OCI-LY7 (cell line): ENCODE measurements at regions of chr6 and their contacts with region 1.

Region 1: GRCh38 chr6:134174672-134175198 is 122.3 kb upstream of the SLC2A12 start:
- DNase-seq: peak; percentile 93
- H3K4me3 ChIP-seq: peak overlapping the region; percentile 76
- H3K27ac ChIP-seq: peak overlapping the region; percentile 39
- H3K4me1 ChIP-seq: peaks cover 35% of the 10 kb centered on the region
- CTCF ChIP-seq: no peak

Region 2: DNA sequence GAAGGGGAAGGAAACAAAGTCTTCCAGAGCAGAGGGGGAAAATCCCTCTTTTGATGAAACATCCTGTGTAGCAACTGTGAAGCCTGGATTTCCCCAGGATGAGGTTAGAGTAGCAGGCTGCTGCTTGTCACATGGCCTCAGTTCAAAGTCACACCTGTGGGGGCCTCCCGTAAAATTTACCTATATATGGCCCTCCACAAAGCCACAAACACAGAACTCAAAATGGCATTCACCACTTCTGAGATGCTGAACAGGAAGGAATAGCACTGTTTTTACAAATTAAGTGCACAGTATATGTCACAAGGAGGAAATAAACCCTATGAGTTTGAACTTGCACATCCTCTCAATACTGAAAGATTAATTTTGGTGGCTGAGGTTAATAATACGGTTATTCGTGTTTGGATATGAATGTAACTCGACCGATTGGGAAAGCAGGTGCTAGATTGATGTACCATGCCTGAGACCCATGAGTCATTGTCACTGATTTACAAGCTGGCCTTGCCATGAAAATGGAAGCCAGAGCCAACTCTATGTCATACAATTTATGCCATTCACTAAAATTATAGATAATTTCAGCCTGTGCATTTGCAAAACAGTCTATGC is 72.6 kb after region 1 on chr6:
- CTCF ChIA-PET with region 1: no interaction called
- POLR2A ChIA-PET with region 1: no interaction called
- intact Hi-C with region 1: loop called (anchors 1 kb)
- DNase-seq: peak; percentile 87
- H3K4me3 ChIP-seq: peak overlapping the region; percentile 46
- H3K27ac ChIP-seq: peak overlapping the region; percentile 91
- H3K4me1 ChIP-seq: peaks cover 57% of the 10 kb centered on the region
- CTCF ChIP-seq: no peak

Region 3: GRCh38 chr6:134630508-134631121 is 455.9 kb after region 1 on chr6:
- CTCF ChIA-PET with region 1: no interaction called
- POLR2A ChIA-PET with region 1: no interaction called
- intact Hi-C with region 1: loop called (anchors 2 kb)
- DNase-seq: peak; percentile 79
- H3K4me3 ChIP-seq: peak overlapping the region; percentile 42
- H3K27ac ChIP-seq: peak overlapping the region; percentile 38
- H3K4me1 ChIP-seq: peaks cover 37% of the 10 kb centered on the region
- CTCF ChIP-seq: no peak

Region 4: DNA sequence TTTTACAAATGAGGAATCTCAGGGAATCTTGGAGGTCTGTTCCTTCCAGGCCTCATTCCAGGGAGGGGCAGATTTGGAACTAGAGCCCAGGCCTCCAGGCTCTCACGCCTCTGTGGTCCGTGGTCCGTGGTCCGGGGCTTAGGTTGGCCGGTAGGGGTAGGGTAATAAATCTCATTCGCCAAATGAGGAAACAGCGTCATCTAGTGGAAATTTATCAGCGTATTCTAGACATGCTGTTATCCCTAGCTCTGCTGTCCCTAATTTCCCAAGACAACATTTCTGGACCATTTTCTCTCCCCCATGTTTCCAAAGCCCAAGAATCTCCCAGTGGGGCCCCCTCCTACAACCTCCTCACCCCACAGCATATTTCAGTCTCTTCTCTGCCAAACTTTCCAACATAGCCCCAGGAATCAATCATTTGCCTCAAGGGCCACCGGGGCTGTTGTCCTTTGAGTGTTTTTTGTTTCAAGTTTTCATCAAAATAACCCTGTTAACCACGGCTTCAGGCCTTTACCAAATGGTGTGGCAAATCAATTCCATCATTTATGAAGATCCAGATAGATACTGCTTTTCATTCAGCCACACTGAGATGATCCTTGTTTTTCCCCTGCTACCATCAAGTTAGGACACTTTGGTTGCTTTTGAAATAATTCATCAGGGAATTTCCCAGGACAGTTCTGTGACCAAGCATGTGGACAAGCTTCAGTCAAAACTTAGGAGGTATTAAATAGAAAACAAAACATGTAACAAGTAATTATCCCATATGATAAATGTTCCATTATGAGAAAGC is 648.4 kb after region 1 on chr6:
- CTCF ChIA-PET with region 1: no interaction called
- POLR2A ChIA-PET with region 1: no interaction called
- intact Hi-C with region 1: loop called (anchors 1 kb)
- DNase-seq: peak; percentile 65
- H3K4me3 ChIP-seq: no peak overlapping the region
- H3K27ac ChIP-seq: no peak overlapping the region
- H3K4me1 ChIP-seq: peaks cover 12% of the 10 kb centered on the region
- CTCF ChIP-seq: peak; percentile 82

Region 5: GRCh38 chr6:134882426-134883038 is 707.8 kb after region 1 on chr6:
- CTCF ChIA-PET with region 1: no interaction called
- POLR2A ChIA-PET with region 1: interaction called, 3 read pairs
- intact Hi-C with region 1: loop called (anchors 1 kb)
- DNase-seq: peak; percentile 65
- H3K4me3 ChIP-seq: no peak overlapping the region
- H3K27ac ChIP-seq: no peak overlapping the region
- H3K4me1 ChIP-seq: peaks cover 6% of the 10 kb centered on the region
- CTCF ChIP-seq: peak; percentile 94

Region 6: DNA sequence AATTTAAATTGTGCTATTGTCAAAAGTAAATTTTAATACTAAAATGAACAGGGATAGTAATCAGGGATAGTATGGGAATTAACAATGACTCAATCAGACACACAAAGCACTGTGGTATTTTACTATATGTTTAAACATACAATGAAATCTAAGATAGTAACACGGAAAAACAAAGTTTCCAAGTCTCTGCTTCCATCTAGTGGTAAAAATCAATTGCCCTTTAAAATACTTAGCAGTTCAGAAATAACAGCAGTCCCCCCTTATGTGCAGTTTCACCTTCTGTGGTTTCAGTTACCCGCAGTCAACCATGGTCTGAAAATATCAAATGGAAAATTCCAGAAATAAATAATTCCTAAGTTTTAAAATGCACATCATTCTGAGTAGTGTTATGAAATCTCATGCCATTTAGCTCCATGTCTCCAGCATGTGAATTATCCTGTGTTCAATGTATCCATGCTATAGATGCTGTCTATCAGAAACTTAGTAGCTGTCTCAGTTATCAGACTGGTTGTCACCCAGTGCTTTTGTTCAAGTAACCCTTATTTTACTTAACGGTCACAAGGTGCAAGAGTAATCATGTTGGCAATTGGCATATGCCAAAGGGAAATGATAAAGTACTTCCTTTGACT is 1264.3 kb after region 1 on chr6:
- CTCF ChIA-PET with region 1: no interaction called
- POLR2A ChIA-PET with region 1: no interaction called
- intact Hi-C with region 1: loop called (anchors 10 kb)
- DNase-seq: peak; percentile 73
- H3K4me3 ChIP-seq: no peak overlapping the region
- H3K27ac ChIP-seq: no peak overlapping the region
- H3K4me1 ChIP-seq: peaks cover 25% of the 10 kb centered on the region
- CTCF ChIP-seq: peak; percentile 95